Thyroid gland (tissue), 4 donors: ENCODE measurements at regions of chr16 and their contacts with region 1.

Region 1: DNA sequence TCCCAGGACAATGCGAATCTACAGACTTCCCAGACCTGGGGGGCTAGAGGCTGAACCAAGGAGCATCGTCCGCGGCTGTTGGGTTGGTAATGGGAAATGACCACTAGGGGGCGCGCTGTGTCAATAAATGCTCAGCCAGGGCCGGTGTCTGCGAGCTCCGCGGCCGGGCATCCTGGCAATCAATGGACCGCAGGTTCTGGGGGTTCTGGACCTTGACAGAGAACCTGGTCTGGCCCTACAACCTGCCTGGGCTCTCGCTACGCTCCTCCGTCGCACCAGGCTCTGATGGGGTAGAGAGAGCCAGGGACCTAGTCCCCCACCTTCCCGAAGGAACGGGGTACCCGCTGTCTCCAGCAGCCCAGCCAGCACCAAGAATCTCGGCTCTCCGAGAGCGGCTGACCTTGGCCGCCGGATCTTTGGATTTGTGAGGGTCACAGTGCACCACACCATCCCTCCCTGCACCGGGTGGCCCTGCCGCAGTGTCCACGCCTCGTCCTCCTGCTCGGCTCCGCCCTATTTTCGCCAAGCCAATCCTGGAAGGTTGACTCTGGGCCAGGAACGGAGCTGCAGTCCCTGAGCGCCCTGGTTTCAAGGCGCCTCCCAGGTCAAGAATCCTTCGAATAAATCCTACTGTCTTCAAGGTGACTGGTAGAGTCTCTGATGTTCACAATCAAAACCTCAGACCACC is 20.4 kb upstream of the BEAN1 start:
- DNase-seq: peak; percentile 78 to 87
- H3K4me3 ChIP-seq: peak overlapping the region in 2 of 3 donors; percentile 9 to 33
- H3K27ac ChIP-seq: no peak overlapping the region
- H3K4me1 ChIP-seq: peaks cover 0 to 13% of the 10 kb centered on the region in 2 donors
- H3K27me3 ChIP-seq: no peaks in the 10 kb centered on the region
- CTCF ChIP-seq: peak; percentile 64 to 92 (median 88)
- POLR2A ChIP-seq: no peak

Region 2: DNA sequence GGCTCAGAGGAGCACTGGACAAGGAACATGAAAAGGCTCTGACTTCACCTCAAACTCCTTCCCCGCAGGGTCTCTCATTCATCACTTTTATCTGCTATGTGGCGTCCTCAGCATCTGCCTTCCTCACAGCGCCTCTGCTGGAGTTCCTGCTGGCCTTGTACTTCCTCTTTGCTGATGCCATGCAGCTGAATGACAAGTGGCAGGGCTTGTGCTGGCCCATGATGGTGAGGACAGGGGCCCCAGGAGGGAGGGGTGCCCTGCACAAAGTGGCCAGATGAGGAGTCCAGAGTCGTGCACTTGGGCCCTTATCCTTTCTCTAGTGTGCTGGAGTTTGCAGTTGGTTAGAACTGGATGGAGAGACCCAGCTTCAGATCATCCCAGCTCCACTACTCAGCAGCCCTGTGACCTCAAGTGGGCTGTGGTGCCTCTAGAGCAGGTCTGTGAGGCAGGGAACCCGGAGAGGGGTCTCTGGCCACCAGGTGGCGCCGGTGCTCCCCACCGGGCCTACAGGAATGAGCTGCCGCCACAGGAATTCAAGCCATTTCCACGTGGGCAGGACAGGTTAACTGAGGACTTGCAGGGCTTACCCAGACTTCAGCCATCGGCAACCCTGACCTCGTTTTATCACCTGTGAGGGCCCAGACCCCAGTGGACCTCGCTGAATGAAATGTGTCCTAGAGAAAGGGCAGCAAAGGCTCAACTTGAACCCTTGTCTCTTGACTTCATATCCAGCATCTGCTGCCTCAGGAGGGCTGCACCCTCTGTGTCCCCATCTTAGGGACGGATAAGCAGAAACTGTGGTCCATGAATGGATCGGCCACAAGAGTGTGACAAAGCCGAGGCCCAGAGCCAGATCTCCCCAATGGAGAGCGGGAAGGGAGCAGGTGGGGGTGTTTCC is 201.8 kb after region 1 on chr16:
- intact Hi-C with region 1: loop called (anchors 5 kb)
- DNase-seq: peak; percentile 95 to 96
- H3K4me3 ChIP-seq: no peak overlapping the region
- H3K27ac ChIP-seq: peak overlapping the region in 2 of 3 donors; percentile 28 to 37
- H3K4me1 ChIP-seq: peaks cover 13 to 29% of the 10 kb centered on the region in 2 donors
- H3K27me3 ChIP-seq: no peaks in the 10 kb centered on the region
- CTCF ChIP-seq: peak; percentile 79 to 91 (median 88)
- POLR2A ChIP-seq: no peak